Naive thymus-derived CD8-positive, alpha-beta T cell (primary cell): ENCODE measurements at regions of chr4 and their contacts with region 1.

Region 1: DNA sequence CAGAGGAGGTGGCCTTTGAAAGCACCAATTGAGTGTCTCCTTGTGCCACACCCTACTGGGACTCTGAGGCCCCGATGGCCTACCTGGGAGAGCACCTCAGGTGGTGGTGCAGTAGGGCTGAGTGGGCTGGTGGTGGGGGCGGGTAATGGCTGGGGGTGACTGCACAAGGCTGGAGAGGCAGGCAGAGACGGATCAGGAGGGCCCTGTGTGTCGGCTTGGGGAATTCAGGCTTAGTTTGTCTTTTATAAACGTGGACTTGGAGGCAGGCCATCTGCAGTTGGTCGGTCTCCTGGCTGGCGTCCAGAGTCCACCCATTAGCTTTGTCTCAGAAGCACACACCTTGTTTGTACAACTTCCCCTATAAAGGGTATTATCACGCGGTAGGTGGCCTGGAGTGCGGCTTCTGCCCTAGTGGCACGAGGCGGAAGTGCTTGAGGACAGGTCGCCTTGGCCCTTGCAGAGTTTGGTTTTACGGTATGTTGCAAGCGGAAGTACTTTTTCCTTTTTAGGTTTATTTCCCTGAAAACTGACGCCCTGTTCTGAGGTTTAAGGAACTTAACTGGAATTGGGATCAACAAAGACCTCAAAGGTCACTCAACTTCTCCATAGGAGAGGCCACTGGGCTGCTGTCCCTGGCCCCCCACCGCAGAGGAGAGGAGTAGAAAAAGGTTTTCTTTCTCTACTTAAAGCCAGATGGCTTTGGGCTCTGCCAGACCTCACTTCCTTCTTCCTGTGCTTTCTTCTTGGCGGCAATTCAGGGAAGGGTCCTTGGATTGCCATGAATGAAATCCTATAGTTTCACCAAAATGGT is 8.0 kb downstream of the TBC1D14 start:
- DNase-seq: peak in 6 of 10 donors; percentile 11 to 40 (median 33)
- ATAC-seq: peak; percentile 62 to 65
- H3K4me3 Mint-ChIP-seq: peak overlapping the region; percentile 34 to 85 (median 73)
- H3K27ac Mint-ChIP-seq: peak overlapping the region; percentile 90 to 98 (median 96)
- H3K4me1 Mint-ChIP-seq: peaks cover 39 to 86% (median 82%) of the 10 kb centered on the region in 4 donors
- H3K27me3 Mint-ChIP-seq: no peaks in the 10 kb centered on the region

Region 2: GRCh38 chr4:6898763-6899162 is 18.9 kb before region 1 on chr4:
- POLR2A ChIA-PET with region 1: interaction called, 14 read pairs
- DNase-seq: no peak
- ATAC-seq: peak; percentile 33 to 35
- H3K4me3 Mint-ChIP-seq: peak overlapping the region in 9 of 10 donors; percentile 55 to 75 (median 69)
- H3K27ac Mint-ChIP-seq: peak overlapping the region; percentile 86 to 97 (median 93)
- H3K4me1 Mint-ChIP-seq: peaks cover 14 to 37% (median 26%) of the 10 kb centered on the region in 4 donors
- H3K27me3 Mint-ChIP-seq: no peaks in the 10 kb centered on the region

Region 3: DNA sequence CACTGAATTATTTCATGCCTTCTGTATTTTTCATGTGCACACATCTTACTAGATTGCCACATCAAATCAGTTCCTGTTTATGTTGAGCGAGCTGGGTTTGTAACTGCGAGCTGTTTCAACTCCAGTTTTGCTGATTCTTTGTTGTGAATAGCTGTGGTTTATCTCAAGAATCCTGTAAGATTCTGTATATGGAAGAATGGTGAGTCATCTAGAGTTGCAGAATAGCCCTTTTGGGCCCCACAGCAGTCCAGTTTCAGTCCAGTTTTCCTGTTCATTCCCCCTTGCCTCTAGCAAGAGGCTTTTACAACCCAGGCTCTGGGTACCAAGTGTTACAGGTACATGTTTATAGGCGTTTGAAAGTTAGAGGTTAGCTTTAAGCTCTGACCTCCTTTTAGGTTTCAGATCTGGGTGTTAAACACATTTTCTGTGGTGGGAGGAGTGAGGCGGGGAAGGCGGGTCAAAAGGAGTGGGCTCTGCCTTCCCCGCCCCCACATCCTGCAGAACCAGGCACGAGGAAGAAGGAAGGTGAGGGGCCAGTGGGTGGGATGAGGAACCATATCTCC is 24.7 kb after region 1 on chr4:
- POLR2A ChIA-PET with region 1: interaction called, 58 read pairs
- DNase-seq: peak in 9 of 10 donors; percentile 6 to 75 (median 43)
- ATAC-seq: peak; percentile 87 to 89
- H3K4me3 Mint-ChIP-seq: peak overlapping the region; percentile 71 to 90 (median 81)
- H3K27ac Mint-ChIP-seq: peak overlapping the region; percentile 84 to 97 (median 94)
- H3K4me1 Mint-ChIP-seq: peaks cover 35 to 86% (median 76%) of the 10 kb centered on the region in 4 donors
- H3K27me3 Mint-ChIP-seq: no peaks in the 10 kb centered on the region